ENCODE measurements at regions of chr6 and their contacts with region 1.

Region 1: GRCh38 chr6:81977486-81977885 is 225.0 kb upstream of the TENT5A start:
- DNase-seq: no peak
- ATAC-seq: no peak
- H3K4me3 ChIP-seq: no peak overlapping the region
- H3K27ac ChIP-seq: no peak overlapping the region
- H3K4me1 ChIP-seq: no peaks in the 10 kb centered on the region
- H3K27me3 ChIP-seq: no peaks in the 10 kb centered on the region
- CTCF ChIP-seq: no peak
- EP300 ChIP-seq: no peak
- POLR2A ChIP-seq: no peak
- RAD21 ChIP-seq: no peak

Region 2: DNA sequence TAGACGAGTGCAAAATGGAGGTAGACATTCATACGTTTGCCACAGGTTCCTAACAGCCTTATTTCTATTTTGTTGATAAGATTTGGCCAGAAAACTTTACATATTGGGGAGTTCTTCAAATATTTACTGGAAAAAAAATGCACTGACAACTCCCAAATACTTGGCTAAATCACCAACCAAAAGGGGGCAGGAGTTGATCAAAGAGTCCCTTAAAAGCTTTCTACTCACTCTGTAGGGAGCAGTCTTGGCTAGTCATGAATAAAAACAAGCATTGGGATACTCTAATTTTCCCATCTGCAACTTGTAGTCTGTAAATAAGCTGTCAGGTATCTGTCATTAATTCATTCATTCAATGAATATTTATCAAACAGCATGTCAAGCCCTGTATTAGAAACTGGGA is 243.4 kb before region 1 on chr6:
- CTCF ChIA-PET with region 1: interaction called, 3 read pairs
- POLR2A ChIA-PET with region 1: no interaction called
- RAD21 ChIA-PET with region 1: interaction called, 4 read pairs
- SMC1A ChIA-PET with region 1: interaction called, 11 read pairs
- in situ Hi-C with region 1: no loop called
- intact Hi-C with region 1: no loop called
- DNase-seq: no peak
- ATAC-seq: no peak
- H3K4me3 ChIP-seq: no peak overlapping the region
- H3K27ac ChIP-seq: no peak overlapping the region
- H3K4me1 ChIP-seq: no peaks in the 10 kb centered on the region
- H3K27me3 ChIP-seq: no peaks in the 10 kb centered on the region
- CTCF ChIP-seq: peak in 1 of 3 experiments; percentile 32; a peak in 1 of 6 replicates
- EP300 ChIP-seq: no peak
- POLR2A ChIP-seq: no peak
- RAD21 ChIP-seq: peak; percentile 36; the same call in 1 of the 2 replicates

Region 3: DNA sequence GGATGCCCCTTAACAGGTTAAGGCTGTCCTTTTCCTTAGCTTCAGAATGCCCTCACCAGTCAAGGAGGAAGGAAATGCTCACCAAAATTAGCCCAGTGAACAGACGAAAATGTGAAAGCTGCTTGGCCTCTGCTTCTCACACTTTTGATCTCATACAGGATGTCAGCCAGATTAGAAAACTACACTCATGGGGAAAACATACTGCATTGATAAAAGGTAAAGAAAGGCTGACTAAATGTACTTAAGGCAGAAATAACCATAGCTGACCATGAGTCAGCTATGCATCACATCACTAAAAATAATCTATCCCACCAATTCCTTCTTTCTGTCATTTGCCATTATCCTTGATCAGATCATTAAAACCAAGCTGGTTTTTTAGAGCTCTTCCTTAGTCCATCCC is 26.6 kb before region 1 on chr6:
- CTCF ChIA-PET with region 1: interaction called, 6 read pairs
- POLR2A ChIA-PET with region 1: no interaction called
- RAD21 ChIA-PET with region 1: no interaction called
- SMC1A ChIA-PET with region 1: interaction called, 18 read pairs
- in situ Hi-C with region 1: no loop called
- intact Hi-C with region 1: no loop called
- DNase-seq: peak; percentile 54
- ATAC-seq: no peak
- H3K4me3 ChIP-seq: no peak overlapping the region
- H3K27ac ChIP-seq: no peak overlapping the region
- H3K4me1 ChIP-seq: no peaks in the 10 kb centered on the region
- H3K27me3 ChIP-seq: no peaks in the 10 kb centered on the region
- CTCF ChIP-seq: no peak
- EP300 ChIP-seq: no peak
- POLR2A ChIP-seq: no peak
- RAD21 ChIP-seq: no peak